Lower leg skin (tissue), 4 donors: ENCODE measurements at regions of chr1 and their contacts with region 1.

Region 1: DNA sequence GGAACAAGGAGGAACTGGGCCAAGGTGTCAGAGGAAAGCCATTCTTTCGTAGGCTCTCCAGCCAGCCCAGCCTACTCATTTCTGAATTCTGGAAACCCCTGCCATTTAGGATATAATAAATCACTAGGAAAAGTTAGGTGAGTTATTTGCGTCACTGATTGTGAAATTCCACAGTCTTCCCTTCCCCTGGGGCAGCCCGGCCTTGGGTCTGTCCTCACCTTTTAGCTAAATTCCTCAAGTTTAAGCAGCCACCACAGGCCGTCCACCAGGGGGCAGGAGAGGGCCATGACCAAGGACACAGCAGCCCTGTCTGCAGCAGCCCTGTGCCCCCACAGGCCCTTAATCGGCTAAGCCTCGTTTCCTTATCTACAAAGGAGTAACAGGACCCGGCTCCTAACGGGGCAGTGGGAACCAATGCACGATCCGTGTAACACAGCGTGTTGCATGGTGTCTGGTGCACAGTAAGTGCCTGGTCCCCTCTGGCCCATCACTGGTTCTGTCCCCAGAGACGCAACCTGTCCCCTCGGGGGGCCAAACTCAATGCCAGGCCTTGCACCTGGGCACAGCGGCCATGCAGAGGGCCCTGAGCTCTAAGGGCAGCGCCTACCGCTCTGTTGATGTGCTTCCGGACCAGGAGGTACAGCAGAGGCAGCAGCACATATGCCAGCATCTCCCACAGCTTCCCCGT is 18.1 kb downstream of the GPR157 start:
- DNase-seq: peak; percentile 81 to 97
- H3K4me3 ChIP-seq: no peak overlapping the region
- CTCF ChIP-seq: peak in 2 of 3 donors; percentile 73 to 82
- POLR2A ChIP-seq: no peak

Region 2: DNA sequence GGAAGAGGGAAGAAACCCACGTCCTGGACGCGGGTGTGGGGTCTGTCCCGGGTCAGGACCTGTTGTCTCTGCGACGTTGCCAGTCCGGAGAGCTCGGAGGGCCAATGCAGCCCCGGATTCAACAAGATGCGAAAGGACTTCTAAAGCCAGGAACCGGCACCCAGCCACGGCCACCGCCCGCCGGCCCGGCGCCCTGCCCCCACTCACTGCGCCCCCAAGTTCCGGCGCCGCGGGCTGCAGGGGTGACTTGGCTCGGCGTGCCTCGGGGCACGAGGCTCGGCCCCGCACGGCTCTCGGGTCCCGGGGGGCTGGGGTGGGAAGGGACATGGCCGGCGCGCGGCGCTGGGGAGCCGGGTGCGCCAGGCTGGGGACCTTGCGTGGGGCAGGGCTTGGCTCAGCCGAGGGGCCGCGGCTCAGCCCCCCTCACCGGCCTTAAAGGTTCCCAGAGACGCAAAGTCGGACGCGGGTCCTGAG is 72.0 kb after region 1 on chr1:
- intact Hi-C with region 1: loop called (anchors 5 kb)
- DNase-seq: no peak
- H3K4me3 ChIP-seq: peak overlapping the region; percentile 63
- CTCF ChIP-seq: no peak
- POLR2A ChIP-seq: no peak

Region 3: GRCh38 chr1:9196129-9197040 is 85.6 kb after region 1 on chr1:
- intact Hi-C with region 1: loop called (anchors 5 kb)
- DNase-seq: peak; percentile 62 to 92
- H3K4me3 ChIP-seq: no peak overlapping the region
- CTCF ChIP-seq: peak in 1 of 3 donors; percentile 48
- POLR2A ChIP-seq: no peak